Activated CD4-positive, alpha-beta memory T cell treated with anti-CD3 and anti-CD28 coated beads for 36 hours (primary cell): ENCODE measurements at regions of chr13 and their contacts with region 1.

Region 1: GRCh38 chr13:30465585-30466357 is at the start of gene HMGB1:
- DNase-seq: peak; percentile 99
- H3K4me3 Mint-ChIP-seq: peak within 1 kb of the TSS; percentile 89
- H3K27ac Mint-ChIP-seq: peak within 1 kb of the TSS; percentile 99
- H3K4me1 Mint-ChIP-seq: peaks cover 31% of the 10 kb centered on the region
- H3K27me3 Mint-ChIP-seq: peaks cover 3% of the 10 kb centered on the region
- total RNA-seq, gene HMGB1: 689 to 693 TPM

Region 2: DNA sequence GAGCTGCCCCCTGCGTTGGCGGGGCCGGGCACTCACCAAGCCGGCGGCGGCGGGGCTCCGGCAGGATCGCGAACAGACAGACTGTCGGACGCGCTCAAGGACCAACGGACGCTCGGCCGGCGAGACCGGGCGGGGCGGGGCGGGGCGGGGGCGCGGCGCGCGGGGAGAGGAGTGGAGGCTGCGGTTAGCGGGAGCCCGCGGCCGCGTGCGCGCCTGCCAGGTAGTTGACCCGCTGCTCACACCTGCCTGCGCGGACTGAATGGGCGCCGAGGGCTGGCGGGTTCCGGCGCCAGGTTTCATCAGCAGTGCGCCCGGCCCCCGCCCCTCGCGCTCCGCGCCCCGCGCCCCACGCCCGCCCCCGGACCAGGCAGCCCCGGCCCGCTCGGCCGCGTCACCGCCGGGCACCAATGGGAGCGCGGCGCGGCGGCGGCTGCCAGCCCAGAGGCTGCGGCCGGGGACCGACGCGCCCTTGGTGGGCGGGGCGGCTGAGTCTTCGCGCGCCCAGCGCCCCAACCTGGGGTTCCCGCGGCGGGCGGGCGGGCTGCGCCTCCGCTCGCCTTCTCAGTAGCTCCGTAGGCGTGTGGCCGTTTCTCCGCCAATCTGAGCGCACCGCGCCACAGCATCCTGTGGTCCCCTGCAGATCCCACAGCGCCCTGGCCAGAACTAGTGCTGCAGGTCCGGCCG is 870.2 kb before region 1 on chr13 and contains the start of gene SLC7A1:
- CTCF ChIA-PET with region 1: no interaction called
- POLR2A ChIA-PET with region 1: no interaction called
- intact Hi-C with region 1: loop called (anchors 10 kb)
- DNase-seq: peak; percentile 90
- H3K4me3 Mint-ChIP-seq: peak within 1 kb of the TSS; percentile 89
- H3K27ac Mint-ChIP-seq: peak within 1 kb of the TSS; percentile 97
- H3K4me1 Mint-ChIP-seq: peaks cover 45% of the 10 kb centered on the region
- H3K27me3 Mint-ChIP-seq: peaks cover 1% of the 10 kb centered on the region
- total RNA-seq, gene SLC7A1: 106 to 114 TPM

Region 3: GRCh38 chr13:30132623-30133553 is 332.9 kb before region 1 on chr13:
- CTCF ChIA-PET with region 1: interaction called, 18 read pairs
- POLR2A ChIA-PET with region 1: no interaction called
- intact Hi-C with region 1: loop called (anchors 1 kb)
- DNase-seq: peak; percentile 98
- H3K4me3 Mint-ChIP-seq: no peak overlapping the region
- H3K27ac Mint-ChIP-seq: no peak overlapping the region
- H3K4me1 Mint-ChIP-seq: peaks cover 11% of the 10 kb centered on the region
- H3K27me3 Mint-ChIP-seq: no peaks in the 10 kb centered on the region

Region 4: DNA sequence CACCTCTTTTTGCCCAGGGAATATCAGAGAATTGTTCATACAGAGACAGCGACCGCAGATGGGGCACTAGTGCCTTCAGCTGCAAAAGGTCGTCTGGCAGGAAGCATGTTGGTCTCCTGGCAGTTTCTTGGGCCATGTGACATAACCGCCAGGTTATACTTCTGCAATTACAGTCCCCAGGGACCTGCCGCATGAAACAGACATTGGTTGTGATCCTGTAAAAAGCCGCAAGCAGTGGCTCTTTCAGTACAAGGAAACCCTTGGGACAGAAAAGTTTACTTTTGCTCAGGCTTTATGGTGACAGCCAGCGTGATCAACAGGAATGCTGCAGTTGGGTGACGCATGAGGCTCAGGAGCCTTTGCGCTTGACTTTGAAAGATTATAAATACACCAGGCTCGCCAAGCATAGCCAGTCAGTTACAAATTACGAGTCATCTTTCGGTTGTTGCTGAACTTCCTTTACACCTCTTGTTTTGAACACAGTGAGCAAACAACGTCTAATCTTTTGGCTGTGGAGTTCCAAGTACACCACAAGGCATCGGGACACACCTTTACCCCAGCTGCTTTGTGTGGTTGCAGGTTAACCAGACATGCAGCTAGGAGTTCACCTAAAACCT is 94.0 kb before region 1 on chr13:
- CTCF ChIA-PET with region 1: interaction called, 3 read pairs
- POLR2A ChIA-PET with region 1: interaction called, 19 read pairs
- intact Hi-C with region 1: loop called (anchors 1 kb)
- DNase-seq: peak; percentile 84
- H3K4me3 Mint-ChIP-seq: peak overlapping the region; percentile 55
- H3K27ac Mint-ChIP-seq: peak overlapping the region; percentile 82
- H3K4me1 Mint-ChIP-seq: peaks cover 79% of the 10 kb centered on the region
- H3K27me3 Mint-ChIP-seq: no peaks in the 10 kb centered on the region

Region 5: GRCh38 chr13:30422054-30422839 is 43.5 kb before region 1 on chr13 and contains the start of gene UBE2L5:
- CTCF ChIA-PET with region 1: interaction called, 3 read pairs
- POLR2A ChIA-PET with region 1: interaction called, 4 read pairs
- intact Hi-C with region 1: loop called (anchors 2 kb)
- DNase-seq: peak; percentile 77
- H3K4me3 Mint-ChIP-seq: peak within 1 kb of the TSS; percentile 86
- H3K27ac Mint-ChIP-seq: peak within 1 kb of the TSS; percentile 80
- H3K4me1 Mint-ChIP-seq: peaks cover 12% of the 10 kb centered on the region
- H3K27me3 Mint-ChIP-seq: no peaks in the 10 kb centered on the region
- total RNA-seq, gene UBE2L5: not detected

Region 6: GRCh38 chr13:30486230-30487074 is 20.7 kb after region 1 on chr13:
- CTCF ChIA-PET with region 1: no interaction called
- POLR2A ChIA-PET with region 1: no interaction called
- intact Hi-C with region 1: no loop called
- DNase-seq: no peak
- H3K4me3 Mint-ChIP-seq: no peak overlapping the region
- H3K27ac Mint-ChIP-seq: no peak overlapping the region
- H3K4me1 Mint-ChIP-seq: no peaks in the 10 kb centered on the region
- H3K27me3 Mint-ChIP-seq: no peaks in the 10 kb centered on the region

Region 7: DNA sequence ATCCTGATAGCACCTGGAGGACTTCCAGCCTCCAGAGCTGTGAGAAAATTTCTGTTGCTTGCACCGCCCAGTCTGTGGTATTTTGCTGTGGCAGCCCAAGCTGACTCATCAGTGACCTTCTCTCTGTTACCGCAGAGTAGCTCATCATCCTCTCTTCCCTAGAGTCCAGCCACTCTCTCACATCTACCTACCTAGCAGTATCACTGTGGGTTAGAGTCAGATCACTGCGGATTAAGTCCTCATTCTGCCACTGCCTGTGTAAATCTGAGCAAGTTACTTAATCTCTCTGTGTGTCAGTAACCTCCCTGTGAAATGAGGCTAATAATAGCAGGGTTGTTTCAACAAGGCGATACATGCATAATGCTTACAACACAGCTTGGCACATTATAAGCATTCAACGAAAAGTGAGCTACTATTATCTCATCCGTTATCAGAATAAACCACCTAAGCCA is 111.7 kb after region 1 on chr13:
- CTCF ChIA-PET with region 1: no interaction called
- POLR2A ChIA-PET with region 1: no interaction called
- intact Hi-C with region 1: loop called (anchors 2 kb)
- DNase-seq: peak; percentile 80
- H3K4me3 Mint-ChIP-seq: no peak overlapping the region
- H3K27ac Mint-ChIP-seq: peak overlapping the region; percentile 11
- H3K4me1 Mint-ChIP-seq: peaks cover 23% of the 10 kb centered on the region
- H3K27me3 Mint-ChIP-seq: peaks cover 1% of the 10 kb centered on the region

Region 8: DNA sequence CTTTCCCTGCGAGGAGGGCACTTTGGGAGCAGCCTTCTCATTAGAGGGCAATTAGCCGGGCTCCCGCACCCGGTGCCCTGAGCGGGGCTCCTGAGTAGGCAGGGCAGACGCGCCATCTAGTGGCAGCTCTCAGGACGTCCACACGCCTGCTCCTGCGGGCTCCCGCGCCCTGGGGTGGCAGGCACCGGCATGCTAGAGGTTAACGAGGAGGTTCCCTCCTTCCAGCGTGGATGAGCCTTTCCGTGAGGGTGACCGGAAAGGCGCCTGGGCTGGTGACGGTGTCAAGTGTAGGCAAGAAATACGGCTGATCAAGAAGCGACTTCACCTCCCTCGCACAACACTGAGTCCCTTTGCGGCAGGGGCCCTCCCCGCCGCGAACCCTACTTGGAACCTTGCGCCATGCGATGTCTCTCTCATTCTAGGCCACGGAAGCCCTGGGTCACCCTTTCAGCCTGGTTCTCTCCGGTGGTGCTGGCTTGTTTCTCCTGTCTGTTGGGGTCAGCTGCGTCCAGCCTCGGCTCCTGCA is 337.2 kb after region 1 on chr13:
- CTCF ChIA-PET with region 1: interaction called, 8 read pairs
- POLR2A ChIA-PET with region 1: no interaction called
- intact Hi-C with region 1: loop called (anchors 5 kb)
- DNase-seq: peak; percentile 89
- H3K4me3 Mint-ChIP-seq: no peak overlapping the region
- H3K27ac Mint-ChIP-seq: no peak overlapping the region
- H3K4me1 Mint-ChIP-seq: peaks cover 14% of the 10 kb centered on the region
- H3K27me3 Mint-ChIP-seq: no peaks in the 10 kb centered on the region